Tibial artery (tissue), 4 donors: ENCODE measurements at regions of chr18 and their contacts with region 1.

Region 1: DNA sequence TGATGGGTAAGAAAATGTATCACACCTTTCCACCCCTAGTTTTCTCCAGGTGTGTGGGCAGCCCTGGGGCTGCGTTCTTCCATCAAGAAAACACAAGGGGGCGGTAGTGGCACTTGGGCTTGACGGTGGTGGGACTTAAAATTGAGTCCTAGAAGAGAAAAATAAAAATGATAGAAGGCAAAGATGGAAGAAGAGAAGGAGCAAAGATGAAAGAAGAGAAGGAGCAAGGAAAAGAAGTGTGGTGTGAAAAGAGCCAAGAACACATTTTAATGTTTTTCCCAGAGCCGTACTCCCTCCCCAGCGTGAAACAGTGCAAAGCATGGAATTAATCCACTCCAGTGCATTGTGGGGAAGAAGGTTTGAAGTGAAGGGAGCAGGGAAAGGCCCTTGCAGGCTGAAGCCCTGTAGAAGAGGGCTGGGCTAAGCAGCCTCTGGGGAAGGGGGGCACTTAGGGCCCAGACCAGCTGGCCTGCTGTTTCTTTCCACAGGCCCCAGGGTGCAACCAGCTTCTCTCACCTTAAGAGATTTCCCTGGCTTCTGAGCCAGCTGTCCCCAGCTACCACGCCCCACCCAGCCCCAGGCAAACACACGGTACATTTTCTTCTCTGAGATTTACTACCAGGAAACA is 256.8 kb downstream of the RNF152 start:
- DNase-seq: peak; percentile 45 to 81
- H3K4me3 ChIP-seq: no peak overlapping the region
- H3K27ac ChIP-seq: peak overlapping the region; percentile 63 to 65
- H3K4me1 ChIP-seq: peaks cover 0 to 33% (median 19%) of the 10 kb centered on the region in 4 donors
- H3K27me3 ChIP-seq: no peaks in the 10 kb centered on the region
- CTCF ChIP-seq: peak; percentile 90 to 91

Region 2: GRCh38 chr18:61569176-61569892 is 66.7 kb before region 1 on chr18:
- intact Hi-C with region 1: no loop called
- DNase-seq: peak in 1 of 2 donors; percentile 72
- H3K4me3 ChIP-seq: no peak overlapping the region
- H3K27ac ChIP-seq: peak overlapping the region; percentile 38 to 52
- H3K4me1 ChIP-seq: peaks cover 0 to 22% (median 9%) of the 10 kb centered on the region in 4 donors
- H3K27me3 ChIP-seq: no peaks in the 10 kb centered on the region
- CTCF ChIP-seq: no peak

Region 3: GRCh38 chr18:61817086-61817485 is 181.1 kb after region 1 on chr18:
- intact Hi-C with region 1: no loop called
- DNase-seq: no peak
- H3K4me3 ChIP-seq: no peak overlapping the region
- H3K27ac ChIP-seq: no peak overlapping the region
- H3K4me1 ChIP-seq: peaks cover 0 to 7% (median 4%) of the 10 kb centered on the region in 4 donors
- H3K27me3 ChIP-seq: no peaks in the 10 kb centered on the region
- CTCF ChIP-seq: no peak

Region 4: DNA sequence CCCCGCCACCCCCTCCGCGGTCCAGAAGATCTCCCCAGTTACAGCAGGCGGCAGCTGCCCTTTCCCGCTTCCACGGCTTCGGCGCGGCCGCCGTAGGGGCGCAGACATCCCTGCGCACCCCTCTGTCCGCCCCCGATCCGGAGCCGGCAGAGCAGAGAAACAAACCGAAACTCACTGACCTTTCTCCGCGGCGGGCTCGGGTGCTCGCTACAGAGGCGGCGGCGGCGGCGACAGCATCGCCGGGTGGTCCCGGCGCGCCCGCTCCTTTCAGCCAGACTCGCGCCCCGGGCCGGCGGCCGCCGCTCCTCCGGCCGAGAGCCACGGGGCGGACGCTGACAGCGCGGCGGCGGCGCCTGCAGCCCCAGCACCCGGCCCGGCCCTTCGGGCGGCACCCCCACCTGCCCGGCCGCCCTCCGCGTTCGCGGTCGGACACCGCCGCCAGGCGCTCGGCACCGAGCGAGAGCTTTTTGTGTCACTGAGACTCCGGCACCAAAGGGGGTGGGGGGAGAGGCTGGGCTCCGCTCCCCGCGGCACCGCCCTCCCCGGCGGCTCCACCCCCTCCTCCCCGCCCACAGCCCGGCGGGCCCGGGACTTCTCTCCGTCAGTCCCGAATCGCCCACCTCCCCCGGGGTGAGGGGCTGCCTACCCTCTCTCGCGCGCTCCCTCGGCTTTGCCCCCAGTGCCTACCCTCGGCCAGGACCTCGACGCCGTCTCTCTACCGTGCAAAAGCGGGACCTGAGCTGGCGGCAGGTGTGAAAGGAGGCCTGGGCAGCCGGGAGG is 258.1 kb after region 1 on chr18:
- intact Hi-C with region 1: loop called (anchors 2 kb)
- DNase-seq: peak; percentile 79 to 93
- H3K4me3 ChIP-seq: peak overlapping the region; percentile 92 to 93
- H3K27ac ChIP-seq: peak overlapping the region; percentile 92 to 93
- H3K4me1 ChIP-seq: peaks cover 0 to 45% (median 19%) of the 10 kb centered on the region in 4 donors
- H3K27me3 ChIP-seq: no peaks in the 10 kb centered on the region
- CTCF ChIP-seq: peak; percentile 46 to 50

Region 5: DNA sequence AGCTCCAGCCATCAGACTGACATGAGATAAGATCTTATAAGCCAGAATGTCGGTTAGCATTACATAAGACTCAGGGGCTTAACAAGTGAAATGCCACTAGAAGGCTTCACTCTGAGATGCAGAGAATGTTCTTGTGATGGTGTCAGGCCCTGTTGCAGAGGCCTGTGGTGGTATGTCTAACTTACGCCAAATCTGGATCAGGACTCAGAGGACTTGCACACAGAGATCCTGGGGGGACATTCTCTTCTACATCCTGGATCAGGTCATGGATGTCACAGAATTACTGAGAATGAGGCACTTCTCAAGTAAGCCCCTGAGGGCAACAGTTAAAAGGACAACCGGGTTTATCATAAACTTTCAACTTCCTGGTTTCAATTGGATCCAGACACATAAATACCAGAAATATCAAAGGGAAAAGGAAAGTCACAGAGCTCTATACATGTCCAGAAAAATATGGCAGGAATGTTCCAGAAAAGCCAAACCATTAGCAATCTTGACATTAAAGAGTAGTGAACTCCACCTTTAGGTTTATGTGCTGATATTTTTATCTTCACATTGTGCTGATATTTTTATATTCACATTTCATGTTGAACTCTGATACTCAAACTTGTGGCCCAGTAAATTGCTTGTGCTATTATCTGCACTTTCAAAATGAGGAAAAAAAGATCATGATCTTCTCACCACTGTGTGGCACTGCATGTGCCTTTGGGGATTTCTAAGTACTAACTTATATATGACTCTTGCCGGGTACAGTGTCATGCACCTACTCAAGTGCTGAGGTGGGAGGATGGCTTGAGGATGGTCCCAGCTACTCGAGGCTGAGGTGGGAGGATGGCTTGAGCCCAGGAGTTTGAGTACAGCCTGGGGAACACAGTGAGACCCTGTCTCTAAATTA is 394.3 kb after region 1 on chr18:
- intact Hi-C with region 1: loop called (anchors 10 kb)
- DNase-seq: no peak
- H3K4me3 ChIP-seq: no peak overlapping the region
- H3K27ac ChIP-seq: no peak overlapping the region
- H3K4me1 ChIP-seq: no peaks in the 10 kb centered on the region
- H3K27me3 ChIP-seq: no peaks in the 10 kb centered on the region
- CTCF ChIP-seq: no peak